Activated naive CD4-positive, alpha-beta T cell treated with anti-CD3 and anti-CD28 coated beads for 36 hours (primary cell): ENCODE measurements at regions of chr10 and their contacts with region 1.

Region 1: DNA sequence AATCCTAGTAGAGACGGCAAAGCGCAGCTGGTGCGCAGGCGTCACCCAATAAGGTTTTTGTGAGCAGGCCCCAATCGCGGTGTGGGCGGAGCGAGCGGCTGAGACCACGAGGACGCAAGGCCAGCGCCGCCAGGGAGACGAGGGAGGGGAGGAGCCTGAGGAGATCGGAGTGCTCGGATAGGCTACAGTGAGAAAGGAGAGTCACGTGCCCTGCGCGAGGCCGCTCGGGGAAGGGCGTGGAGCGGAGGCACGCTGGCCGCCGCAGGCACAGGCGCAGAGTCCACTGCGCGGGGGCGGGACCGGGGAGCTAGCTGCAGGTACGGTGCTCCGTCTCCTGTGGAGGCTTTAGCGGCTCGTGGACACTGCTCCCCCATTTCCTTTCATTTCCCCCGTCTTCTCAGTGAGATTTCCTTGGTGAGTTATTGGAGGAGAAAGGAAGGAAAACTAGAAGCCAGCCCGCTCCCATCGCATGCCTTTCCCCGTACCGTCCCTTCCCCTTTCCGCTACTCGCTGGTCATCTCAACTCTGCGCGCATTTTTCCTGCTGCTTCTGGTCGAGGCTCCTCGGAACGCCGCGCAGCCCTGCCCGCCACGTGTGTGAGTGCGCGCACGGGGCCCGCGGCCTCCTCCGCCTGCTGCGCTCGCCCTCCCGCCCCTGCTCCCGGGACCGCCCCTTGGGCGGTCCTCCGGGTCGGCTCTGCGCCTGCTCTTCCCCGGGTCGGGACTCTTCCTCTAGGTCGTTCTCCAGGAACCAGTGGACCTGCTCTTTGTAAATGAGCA is at the start of gene THNSL1:
- DNase-seq: peak; percentile 97
- H3K4me3 Mint-ChIP-seq: peak within 1 kb of the TSS; percentile 93
- H3K27ac Mint-ChIP-seq: peak within 1 kb of the TSS; percentile 99
- H3K4me1 Mint-ChIP-seq: peaks cover 19% of the 10 kb centered on the region
- H3K27me3 Mint-ChIP-seq: no peaks in the 10 kb centered on the region
- total RNA-seq, gene THNSL1: 6.3 to 7.1 TPM

Region 2: DNA sequence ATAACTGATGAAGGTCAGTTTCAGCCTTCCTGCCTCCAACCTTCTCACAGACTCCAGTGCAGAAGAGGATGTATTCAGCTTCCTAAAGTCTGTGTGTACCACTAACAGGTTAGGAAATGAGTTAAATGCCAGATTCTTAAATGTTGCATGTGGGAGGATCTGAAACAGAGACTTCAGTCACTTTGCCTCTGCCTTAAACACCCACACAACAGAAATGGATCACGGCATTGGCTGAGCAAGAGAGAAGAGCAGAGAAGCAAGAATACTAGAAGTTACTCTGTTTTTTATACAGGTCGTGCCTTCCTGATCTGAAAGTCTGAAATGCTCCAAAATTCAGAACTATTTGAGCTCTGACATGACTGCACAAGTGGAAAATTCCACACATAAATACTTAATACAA is 194.0 kb before region 1 on chr10:
- CTCF ChIA-PET with region 1: no interaction called
- intact Hi-C with region 1: loop called (anchors 5 kb)
- DNase-seq: peak; percentile 35
- H3K4me3 Mint-ChIP-seq: no peak overlapping the region
- H3K27ac Mint-ChIP-seq: no peak overlapping the region
- H3K4me1 Mint-ChIP-seq: peaks cover 45% of the 10 kb centered on the region
- H3K27me3 Mint-ChIP-seq: no peaks in the 10 kb centered on the region

Region 3: DNA sequence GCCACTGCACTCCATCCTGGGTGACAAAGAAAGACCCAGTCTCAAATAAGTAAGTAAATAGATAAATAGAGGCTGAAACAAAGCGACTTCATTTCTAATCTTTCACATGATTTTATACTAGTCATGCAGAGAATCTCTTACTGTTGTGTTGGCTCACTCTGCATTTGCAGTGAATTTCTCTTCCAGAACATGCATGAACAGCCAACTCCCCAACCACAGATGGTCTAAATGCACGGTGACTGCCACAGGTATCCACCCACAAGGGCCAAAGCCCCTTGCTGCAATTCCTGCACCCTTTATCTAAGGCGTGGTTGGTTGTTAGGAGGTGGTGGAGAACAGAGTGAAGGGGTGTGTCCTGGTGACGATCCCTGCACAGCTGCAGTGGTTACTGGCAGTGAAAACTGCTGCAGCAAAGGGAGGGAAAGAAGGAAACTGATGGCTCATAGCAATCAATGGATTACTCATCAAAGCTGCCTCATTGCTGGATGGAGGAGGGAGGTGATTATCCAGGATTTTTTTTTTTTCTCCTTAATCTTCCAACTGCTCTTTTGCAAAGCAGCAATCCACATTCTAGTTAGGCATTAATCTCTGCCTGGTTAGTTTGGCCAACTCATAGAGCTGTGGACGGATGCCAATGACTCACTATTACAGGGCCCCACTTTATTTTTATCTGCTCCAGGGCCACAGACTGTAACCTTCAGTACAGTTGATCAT is 114.7 kb before region 1 on chr10:
- CTCF ChIA-PET with region 1: no interaction called
- intact Hi-C with region 1: loop called (anchors 2 kb)
- DNase-seq: peak; percentile 37
- H3K4me3 Mint-ChIP-seq: no peak overlapping the region
- H3K27ac Mint-ChIP-seq: no peak overlapping the region
- H3K4me1 Mint-ChIP-seq: peaks cover 33% of the 10 kb centered on the region
- H3K27me3 Mint-ChIP-seq: peaks cover 2% of the 10 kb centered on the region

Region 4: GRCh38 chr10:24952707-24953645 is 63.6 kb before region 1 on chr10:
- CTCF ChIA-PET with region 1: no interaction called
- intact Hi-C with region 1: loop called (anchors 2 kb)
- DNase-seq: peak; percentile 39
- H3K4me3 Mint-ChIP-seq: peak overlapping the region; percentile 72
- H3K27ac Mint-ChIP-seq: no peak overlapping the region
- H3K4me1 Mint-ChIP-seq: peaks cover 14% of the 10 kb centered on the region
- H3K27me3 Mint-ChIP-seq: no peaks in the 10 kb centered on the region

Region 5: GRCh38 chr10:25080880-25081581 is 64.5 kb after region 1 on chr10:
- CTCF ChIA-PET with region 1: interaction called, 3 read pairs
- intact Hi-C with region 1: loop called (anchors 2 kb)
- DNase-seq: peak; percentile 77
- H3K4me3 Mint-ChIP-seq: no peak overlapping the region
- H3K27ac Mint-ChIP-seq: no peak overlapping the region
- H3K4me1 Mint-ChIP-seq: peaks cover 3% of the 10 kb centered on the region
- H3K27me3 Mint-ChIP-seq: peaks cover 8% of the 10 kb centered on the region

Region 6: GRCh38 chr10:25294019-25294926 is 277.7 kb after region 1 on chr10:
- CTCF ChIA-PET with region 1: no interaction called
- intact Hi-C with region 1: no loop called
- DNase-seq: peak; percentile 4
- H3K4me3 Mint-ChIP-seq: no peak overlapping the region
- H3K27ac Mint-ChIP-seq: no peak overlapping the region
- H3K4me1 Mint-ChIP-seq: no peaks in the 10 kb centered on the region
- H3K27me3 Mint-ChIP-seq: no peaks in the 10 kb centered on the region